Gastrocnemius medialis (tissue), 4 donors: ENCODE measurements at regions of chr14 and their contacts with region 1.

Region 1: GRCh38 chr14:49879683-49880204 is 13.1 kb upstream of the ARF6 start:
- DNase-seq: peak in 1 of 2 donors; percentile 45
- ATAC-seq: peak; percentile 54 to 84
- H3K4me3 ChIP-seq: no peak overlapping the region
- H3K27ac ChIP-seq: no peak overlapping the region
- H3K4me1 ChIP-seq: no peaks in the 10 kb centered on the region
- H3K27me3 ChIP-seq: no peaks in the 10 kb centered on the region
- CTCF ChIP-seq: peak; percentile 15 to 66 (median 49)
- POLR2A ChIP-seq: no peak

Region 2: DNA sequence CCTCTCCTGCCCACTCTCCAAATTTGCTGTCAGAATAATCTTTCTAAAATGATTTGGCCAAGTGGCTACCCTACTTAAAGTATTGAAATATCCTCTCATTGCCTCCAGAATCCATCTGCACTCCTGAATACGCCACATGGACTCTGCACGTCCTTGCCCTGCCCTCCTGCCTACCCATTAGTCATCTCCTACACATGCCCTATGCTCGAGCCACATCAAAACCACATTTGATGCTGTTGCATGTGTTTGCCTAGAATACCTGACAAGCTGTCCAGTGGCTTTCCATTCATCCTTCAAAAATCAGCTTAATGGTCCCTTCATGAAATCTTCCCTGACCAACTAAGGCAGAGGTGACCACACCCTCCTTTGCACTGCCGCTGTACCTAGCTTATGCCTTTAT is 219.6 kb after region 1 on chr14:
- in situ Hi-C with region 1: loop called in 1 of 4 experiments (anchors 10 kb)
- intact Hi-C with region 1: no loop called
- DNase-seq: no peak
- ATAC-seq: no peak
- H3K4me3 ChIP-seq: no peak overlapping the region
- H3K27ac ChIP-seq: no peak overlapping the region
- H3K4me1 ChIP-seq: no peaks in the 10 kb centered on the region
- H3K27me3 ChIP-seq: no peaks in the 10 kb centered on the region
- CTCF ChIP-seq: no peak
- POLR2A ChIP-seq: no peak